ENCODE measurements at regions of chr17 and their contacts with region 1.

Region 1: GRCh38 chr17:39174907-39175694 is 9.1 kb upstream of the ARL5C start:
- DNase-seq: peak; percentile 67 to 86 (median 72)
- H3K4me3 ChIP-seq: no peak overlapping the region
- H3K4me3 Mint-ChIP-seq: no peak overlapping the region
- H3K27ac ChIP-seq: no peak overlapping the region
- H3K27ac Mint-ChIP-seq: peak overlapping the region in 3 of 8 donors; percentile 23 to 86 (median 46)
- H3K4me1 ChIP-seq: peaks cover 5% of the 10 kb centered on the region
- H3K4me1 Mint-ChIP-seq: peaks cover 7 to 24% (median 16%) of the 10 kb centered on the region in 3 donors
- H3K27me3 ChIP-seq: no peaks in the 10 kb centered on the region
- H3K27me3 Mint-ChIP-seq: peaks cover 0 to 5% of the 10 kb centered on the region in 2 donors

Region 2: GRCh38 chr17:39194089-39194984 is 19.2 kb after region 1 on chr17:
- CTCF ChIA-PET with region 1: interaction called, 10 read pairs
- POLR2A ChIA-PET with region 1: no interaction called
- DNase-seq: no peak
- H3K4me3 ChIP-seq: no peak overlapping the region
- H3K4me3 Mint-ChIP-seq: peak overlapping the region in 3 of 7 donors; percentile 32 to 84 (median 47)
- H3K27ac ChIP-seq: no peak overlapping the region
- H3K27ac Mint-ChIP-seq: peak overlapping the region; percentile 43 to 93 (median 56)
- H3K4me1 ChIP-seq: peaks cover 28% of the 10 kb centered on the region
- H3K4me1 Mint-ChIP-seq: peaks cover 30 to 56% (median 36%) of the 10 kb centered on the region in 3 donors
- H3K27me3 ChIP-seq: no peaks in the 10 kb centered on the region
- H3K27me3 Mint-ChIP-seq: no peaks in the 10 kb centered on the region

Region 3: GRCh38 chr17:39270923-39271322 is 95.8 kb after region 1 on chr17:
- CTCF ChIA-PET with region 1: no interaction called
- POLR2A ChIA-PET with region 1: no interaction called
- DNase-seq: no peak
- H3K4me3 ChIP-seq: no peak overlapping the region
- H3K4me3 Mint-ChIP-seq: no peak overlapping the region
- H3K27ac ChIP-seq: no peak overlapping the region
- H3K27ac Mint-ChIP-seq: no peak overlapping the region
- H3K4me1 ChIP-seq: no peaks in the 10 kb centered on the region
- H3K4me1 Mint-ChIP-seq: no peaks in the 10 kb centered on the region
- H3K27me3 ChIP-seq: no peaks in the 10 kb centered on the region
- H3K27me3 Mint-ChIP-seq: no peaks in the 10 kb centered on the region

Measured in CD8-positive, alpha-beta memory T cell (primary cell).